IMR-90 (cell line): ENCODE measurements at regions of chr4 and their contacts with region 1.

Region 1: DNA sequence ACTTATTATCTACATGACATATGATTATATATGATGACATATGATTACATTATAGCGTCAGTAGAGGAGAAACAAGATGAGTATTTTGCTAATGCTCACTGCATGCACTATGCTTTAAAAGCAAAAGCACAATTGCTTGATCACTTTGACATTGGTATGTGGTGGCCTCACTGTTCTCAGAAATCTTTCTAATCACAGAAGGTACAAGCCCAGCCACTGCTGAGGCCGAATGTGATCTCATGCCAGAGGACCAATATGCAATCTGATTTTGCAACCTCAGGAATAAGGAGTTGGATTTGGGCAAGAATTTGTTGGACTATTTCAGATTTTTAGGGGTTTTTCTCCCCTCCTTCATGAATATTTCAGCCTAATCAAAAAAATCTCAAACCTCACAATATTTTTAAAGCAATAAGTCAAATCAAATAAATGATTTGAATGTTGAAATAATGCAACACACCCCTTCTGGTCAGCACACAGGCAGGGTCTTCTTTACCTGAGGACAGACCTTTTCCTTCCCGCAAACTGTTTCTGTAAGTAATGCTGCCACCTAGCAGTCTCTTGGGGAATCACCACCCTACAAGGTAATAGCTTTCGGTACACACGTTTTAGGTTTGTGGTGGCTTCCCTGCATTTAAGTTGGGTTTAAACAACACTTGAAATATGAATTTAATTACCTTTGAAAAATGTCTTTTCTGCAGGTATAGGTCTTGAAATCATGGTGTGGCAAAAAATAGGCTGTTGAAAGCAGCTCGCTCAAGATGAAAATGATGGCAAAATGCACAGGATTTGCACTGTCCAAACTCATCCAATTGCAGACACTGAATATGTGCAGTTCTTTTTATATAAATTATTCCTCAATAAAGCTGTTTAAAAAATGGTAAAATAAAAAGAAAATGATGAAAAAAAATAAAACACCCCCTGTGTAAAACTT is 4.8 kb upstream of the CXCL13 start:
- DNase-seq: peak; percentile 29
- ATAC-seq: peak; percentile 65
- H3K4me3 ChIP-seq: no peak overlapping the region
- H3K27ac ChIP-seq: no peak overlapping the region
- H3K4me1 ChIP-seq: no peaks in the 10 kb centered on the region
- H3K27me3 ChIP-seq: peaks cover 8% of the 10 kb centered on the region
- CTCF ChIP-seq: peak; percentile 66
- POLR2A ChIP-seq: no peak
- RAD21 ChIP-seq: peak; percentile 71

Region 2: DNA sequence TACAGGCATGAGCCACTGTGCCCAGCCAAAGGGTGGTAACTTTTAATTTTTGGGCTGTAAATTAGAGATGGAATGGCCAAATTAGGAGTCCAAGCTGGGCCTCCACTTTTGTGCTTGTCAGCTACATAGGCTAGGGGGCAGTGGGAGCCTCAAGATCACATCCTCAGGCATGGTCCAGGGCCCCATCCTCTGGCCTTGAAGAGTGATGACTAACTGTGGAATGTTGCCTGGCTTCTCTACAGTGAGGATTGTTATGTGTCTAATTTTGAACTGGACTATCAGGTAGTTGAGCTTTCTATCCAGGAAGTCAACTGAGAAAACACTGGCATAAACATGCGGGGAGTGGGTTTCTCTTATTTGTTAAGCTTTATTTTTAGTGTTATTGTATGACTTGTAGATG is 410.7 kb before region 1 on chr4:
- CTCF ChIA-PET with region 1: no interaction called
- POLR2A ChIA-PET with region 1: no interaction called
- dilution Hi-C with region 1: no loop called
- in situ Hi-C with region 1: no loop called
- intact Hi-C with region 1: no loop called
- DNase-seq: peak; percentile 6
- ATAC-seq: no peak; the same call in 1 of the 2 replicates
- H3K4me3 ChIP-seq: no peak overlapping the region
- H3K27ac ChIP-seq: no peak overlapping the region
- H3K4me1 ChIP-seq: no peaks in the 10 kb centered on the region
- H3K27me3 ChIP-seq: peaks cover 42% of the 10 kb centered on the region
- CTCF ChIP-seq: no peak
- POLR2A ChIP-seq: no peak
- RAD21 ChIP-seq: no peak

Region 3: GRCh38 chr4:77465271-77465670 is 135.5 kb before region 1 on chr4:
- CTCF ChIA-PET with region 1: no interaction called
- POLR2A ChIA-PET with region 1: no interaction called
- dilution Hi-C with region 1: no loop called
- in situ Hi-C with region 1: no loop called
- intact Hi-C with region 1: loop called (anchors 2 kb)
- DNase-seq: no peak
- ATAC-seq: no peak
- H3K4me3 ChIP-seq: no peak overlapping the region
- H3K27ac ChIP-seq: no peak overlapping the region
- H3K4me1 ChIP-seq: no peaks in the 10 kb centered on the region
- H3K27me3 ChIP-seq: no peaks in the 10 kb centered on the region
- CTCF ChIP-seq: no peak
- POLR2A ChIP-seq: no peak
- RAD21 ChIP-seq: peak; percentile 30; the same call in 1 of the 2 replicates

Region 4: DNA sequence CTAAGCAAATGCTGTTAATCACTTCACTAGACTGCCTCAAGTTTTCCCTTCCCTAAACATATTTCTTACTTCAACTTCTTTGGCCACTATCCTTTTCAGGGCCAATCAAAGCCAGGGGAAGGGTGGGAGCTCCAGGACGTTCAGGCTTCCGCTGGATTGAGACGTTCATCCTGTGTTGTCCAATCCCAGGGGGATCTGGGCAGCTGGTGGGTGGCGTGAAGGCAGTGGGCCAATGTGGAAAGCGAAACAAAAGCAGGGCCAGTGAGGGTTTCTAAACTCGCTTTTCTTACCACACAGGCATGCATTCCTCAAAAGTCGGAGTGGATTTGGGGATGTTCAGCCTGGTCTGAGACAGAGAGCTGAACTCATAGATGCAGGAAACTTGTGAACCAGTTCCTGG is 12.5 kb after region 1 on chr4:
- CTCF ChIA-PET with region 1: interaction called, 12 read pairs
- POLR2A ChIA-PET with region 1: no interaction called
- dilution Hi-C with region 1: no loop called
- in situ Hi-C with region 1: no loop called
- intact Hi-C with region 1: no loop called
- DNase-seq: no peak
- ATAC-seq: no peak
- H3K4me3 ChIP-seq: no peak overlapping the region
- H3K27ac ChIP-seq: no peak overlapping the region
- H3K4me1 ChIP-seq: no peaks in the 10 kb centered on the region
- H3K27me3 ChIP-seq: peaks cover 2% of the 10 kb centered on the region
- CTCF ChIP-seq: no peak
- POLR2A ChIP-seq: no peak
- RAD21 ChIP-seq: no peak